CD4-positive, alpha-beta memory T cell (primary cell): ENCODE measurements at regions of chr17 and their contacts with region 1.

Region 1: DNA sequence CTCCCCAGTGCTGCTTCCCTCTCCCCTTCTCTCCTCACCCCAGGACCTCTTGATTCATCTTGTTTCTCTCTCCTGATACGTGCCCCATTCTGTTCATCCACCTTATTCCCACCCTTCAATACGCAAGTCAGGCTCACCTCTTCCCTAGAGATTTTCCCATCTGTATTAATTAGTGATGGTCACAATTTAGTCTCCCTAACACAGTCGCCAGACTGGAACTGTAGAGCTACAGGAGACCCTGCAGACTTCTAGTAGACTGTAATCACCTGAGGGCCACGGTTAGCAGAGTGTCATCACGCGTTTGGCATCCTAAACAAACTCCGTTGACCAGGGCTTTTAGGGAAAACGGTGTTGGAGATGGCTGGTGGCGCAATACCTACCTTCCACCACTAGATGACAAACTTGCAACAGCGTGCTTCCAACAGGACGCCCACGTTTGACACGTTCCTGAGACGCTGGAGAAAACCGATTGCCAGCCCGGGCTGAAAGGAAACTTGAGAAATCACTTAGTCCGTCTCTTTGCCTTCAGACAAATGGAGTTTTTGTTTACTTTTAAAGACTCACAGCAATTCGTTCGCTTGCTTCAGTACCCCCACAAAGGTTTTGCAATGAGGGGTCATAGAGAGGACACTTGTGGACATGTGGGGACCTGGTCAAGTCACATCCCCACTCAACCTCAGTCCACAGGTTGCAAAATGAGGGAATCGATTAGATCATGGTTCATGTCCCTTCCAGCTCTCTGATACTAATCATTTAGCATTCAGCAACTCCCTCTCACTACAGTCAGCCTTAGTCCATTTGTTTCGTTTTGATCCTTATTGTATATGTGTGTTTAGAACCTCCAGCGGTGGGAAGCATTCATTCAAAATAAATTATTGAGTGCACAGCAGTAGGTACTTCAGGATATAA is 20.6 kb downstream of the MYL4 start:
- DNase-seq: peak; percentile 58 to 67 (median 62)
- H3K4me3 ChIP-seq: peak overlapping the region in 1 of 2 donors; percentile 12
- H3K4me3 Mint-ChIP-seq: peak overlapping the region; percentile 3 to 78 (median 66)
- H3K27ac ChIP-seq: no peak overlapping the region
- H3K27ac Mint-ChIP-seq: peak overlapping the region in 4 of 7 donors; percentile 16 to 53 (median 43)
- H3K4me1 ChIP-seq: peaks cover 12% of the 10 kb centered on the region
- H3K4me1 Mint-ChIP-seq: peaks cover 10 to 13% (median 12%) of the 10 kb centered on the region in 4 donors
- H3K27me3 ChIP-seq: no peaks in the 10 kb centered on the region
- H3K27me3 Mint-ChIP-seq: peaks cover 2 to 7% of the 10 kb centered on the region in 2 donors

Region 2: DNA sequence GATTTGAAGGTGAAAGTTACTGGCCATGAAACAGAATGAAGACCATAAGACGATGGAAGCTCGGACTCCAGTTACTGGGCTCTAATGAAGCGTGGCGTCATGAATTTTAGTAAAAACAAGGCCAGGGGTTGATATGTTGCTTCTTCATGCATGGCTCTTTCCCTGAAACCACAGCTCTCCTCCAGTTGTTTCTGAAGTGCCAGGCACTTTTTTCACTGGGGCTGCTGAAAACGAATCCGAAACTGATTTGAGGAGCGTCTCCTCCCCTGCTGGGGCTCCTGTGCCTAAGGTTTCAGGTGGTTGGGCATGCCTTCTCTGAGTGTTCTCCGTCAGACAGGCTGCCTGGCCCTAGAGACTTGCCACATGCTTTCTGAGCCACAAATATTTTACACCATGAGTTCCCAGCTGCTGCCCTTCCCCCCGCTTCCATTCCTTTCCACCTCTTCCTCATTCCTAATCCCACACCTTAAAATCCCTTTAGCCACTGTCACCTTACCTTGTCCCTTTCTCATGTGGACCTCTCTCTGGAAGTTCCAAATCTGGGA is 24.3 kb before region 1 on chr17:
- CTCF ChIA-PET with region 1: interaction called, 11 read pairs
- POLR2A ChIA-PET with region 1: interaction called, 8 read pairs
- intact Hi-C with region 1: loop called (anchors 1 kb)
- DNase-seq: peak; percentile 69 to 87 (median 80)
- H3K4me3 ChIP-seq: peak overlapping the region; percentile 24 to 54
- H3K4me3 Mint-ChIP-seq: peak overlapping the region; percentile 79 to 89 (median 86)
- H3K27ac ChIP-seq: peak overlapping the region; percentile 70
- H3K27ac Mint-ChIP-seq: peak overlapping the region; percentile 93 to 97 (median 95)
- H3K4me1 ChIP-seq: peaks cover 58% of the 10 kb centered on the region
- H3K4me1 Mint-ChIP-seq: peaks cover 42 to 67% (median 55%) of the 10 kb centered on the region in 4 donors
- H3K27me3 ChIP-seq: no peaks in the 10 kb centered on the region
- H3K27me3 Mint-ChIP-seq: no peaks in the 10 kb centered on the region

Region 3: DNA sequence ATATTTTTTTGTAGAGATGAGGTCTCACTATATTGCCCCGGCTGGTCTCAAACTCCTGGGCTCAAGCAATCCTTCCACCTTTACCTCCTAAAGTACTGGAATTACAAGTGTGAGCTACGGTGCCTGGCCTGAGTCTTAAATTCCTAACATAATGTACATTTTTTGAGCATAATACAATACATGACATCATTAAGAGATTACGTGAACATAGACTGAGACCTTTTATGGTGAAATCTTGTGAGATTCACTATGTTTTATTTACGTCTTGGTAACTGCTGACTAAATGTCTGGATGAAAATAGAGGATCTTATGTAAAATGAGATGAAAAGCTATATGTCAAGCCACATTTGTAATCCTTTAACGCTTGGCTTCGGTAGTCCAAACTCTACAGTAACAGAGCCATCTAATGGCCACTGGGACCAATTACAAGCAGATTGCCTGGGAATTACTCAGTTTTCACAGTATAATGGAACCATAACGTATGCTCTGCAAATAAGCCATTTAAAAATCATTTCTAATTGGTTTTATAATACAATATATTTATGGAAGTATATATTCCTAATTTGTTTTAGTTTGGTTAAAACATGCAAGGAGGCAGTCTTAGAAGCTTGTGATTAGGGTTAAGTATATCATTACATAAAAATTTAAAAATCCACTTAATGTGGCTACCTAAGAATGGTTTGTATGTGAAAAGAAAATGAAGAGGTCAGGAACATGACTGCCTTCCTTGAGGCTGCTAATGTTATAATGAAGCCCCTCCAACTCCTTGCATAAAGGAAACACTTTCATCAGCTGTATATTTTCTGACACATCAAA is 85.9 kb after region 1 on chr17:
- CTCF ChIA-PET with region 1: interaction called, 42 read pairs
- POLR2A ChIA-PET with region 1: interaction called, 5 read pairs
- intact Hi-C with region 1: loop called (anchors 1 kb)
- DNase-seq: peak in 4 of 5 donors; percentile 50 to 56 (median 52)
- H3K4me3 ChIP-seq: no peak overlapping the region
- H3K4me3 Mint-ChIP-seq: no peak overlapping the region
- H3K27ac ChIP-seq: no peak overlapping the region
- H3K27ac Mint-ChIP-seq: no peak overlapping the region
- H3K4me1 ChIP-seq: no peaks in the 10 kb centered on the region
- H3K4me1 Mint-ChIP-seq: no peaks in the 10 kb centered on the region
- H3K27me3 ChIP-seq: no peaks in the 10 kb centered on the region
- H3K27me3 Mint-ChIP-seq: peaks cover 0 to 1% of the 10 kb centered on the region in 2 donors

Region 4: GRCh38 chr17:47615766-47616424 is 386.1 kb after region 1 on chr17:
- CTCF ChIA-PET with region 1: interaction called, 7 read pairs
- POLR2A ChIA-PET with region 1: interaction called, 3 read pairs
- intact Hi-C with region 1: loop called (anchors 1 kb)
- DNase-seq: peak in 4 of 5 donors; percentile 45 to 54 (median 50)
- H3K4me3 ChIP-seq: no peak overlapping the region
- H3K4me3 Mint-ChIP-seq: no peak overlapping the region
- H3K27ac ChIP-seq: no peak overlapping the region
- H3K27ac Mint-ChIP-seq: peak overlapping the region in 5 of 7 donors; percentile 22 to 80 (median 63)
- H3K4me1 ChIP-seq: no peaks in the 10 kb centered on the region
- H3K4me1 Mint-ChIP-seq: peaks cover 0 to 6% (median 4%) of the 10 kb centered on the region in 4 donors
- H3K27me3 ChIP-seq: no peaks in the 10 kb centered on the region
- H3K27me3 Mint-ChIP-seq: no peaks in the 10 kb centered on the region